ENCODE measurements at regions of chr9 and their contacts with region 1.

Region 1: GRCh38 chr9:78369639-78370219 is 72.8 kb downstream of the PSAT1 start:
- DNase-seq: peak; percentile 85
- ATAC-seq: peak; percentile 85

Region 2: DNA sequence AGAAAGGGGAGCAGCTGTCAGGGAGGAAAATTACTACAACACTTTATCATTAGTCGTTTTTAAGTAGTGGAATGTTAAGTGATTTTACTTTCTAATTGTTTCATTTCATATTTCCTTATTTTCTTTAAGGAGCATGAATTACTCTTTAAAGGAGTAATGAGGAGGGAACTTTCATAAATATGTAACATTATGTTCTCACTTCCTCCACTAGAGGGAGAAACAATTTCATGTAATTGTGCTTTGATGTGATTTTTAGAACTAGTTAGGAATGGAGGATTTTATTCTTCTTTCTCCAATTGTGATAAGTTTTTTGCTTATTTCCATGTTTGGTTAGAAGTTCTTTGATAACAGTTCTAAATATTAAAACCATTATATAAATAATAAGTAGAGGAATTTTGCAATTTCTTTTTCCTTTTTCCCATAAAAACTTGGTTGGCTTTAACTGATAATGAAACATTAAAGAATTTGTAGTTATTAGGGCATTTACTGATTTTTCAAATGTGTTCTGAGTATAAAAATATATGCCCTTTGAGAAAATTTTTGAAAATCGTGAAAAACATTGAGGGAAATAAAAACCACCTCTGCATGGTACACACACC is 108.2 kb before region 1 on chr9:
- intact Hi-C with region 1: loop called (anchors 5 kb)
- DNase-seq: no peak
- ATAC-seq: no peak